ENCODE measurements at regions of chr2 and their contacts with region 1.

Region 1: GRCh38 chr2:44981136-44982108 is 27.8 kb downstream of the SIX2 start:
- DNase-seq: peak; percentile 82

Region 2: DNA sequence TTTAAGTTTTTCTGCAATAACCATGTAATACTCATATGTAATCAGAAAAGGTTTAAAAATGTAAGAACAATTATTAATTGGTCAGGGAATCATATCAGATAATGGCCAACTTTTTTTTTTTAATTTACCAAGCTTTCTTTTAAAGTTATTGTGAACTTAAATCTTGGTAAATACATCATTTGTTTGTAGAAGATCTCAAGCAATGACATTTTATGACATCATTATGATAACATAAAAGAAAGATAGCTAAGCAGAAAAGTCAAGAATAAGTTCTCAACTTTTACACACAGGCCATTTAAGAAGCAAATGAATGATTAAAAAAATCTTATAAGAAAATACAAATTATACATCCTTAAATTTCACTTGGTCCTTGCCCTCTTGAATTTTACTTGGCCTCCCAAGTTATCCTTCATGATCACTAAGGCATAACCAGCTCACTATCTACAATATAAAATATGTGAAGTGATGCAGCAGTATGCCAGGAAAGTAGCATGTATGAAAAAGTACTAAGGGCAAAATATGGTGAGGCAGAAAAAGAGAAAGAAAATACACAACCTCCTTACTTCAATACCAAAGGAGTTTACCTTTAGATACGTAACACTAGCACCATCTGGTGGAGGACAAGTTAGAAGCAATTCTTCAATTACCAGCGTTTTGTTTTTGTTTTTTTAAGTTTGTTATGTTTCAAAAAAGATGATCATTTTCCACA is 513.0 kb after region 1 on chr2:
- in situ Hi-C with region 1: loop called (anchors 25 kb)
- DNase-seq: peak; percentile 60

Region 3: GRCh38 chr2:45585267-45585861 is 603.9 kb after region 1 on chr2:
- in situ Hi-C with region 1: loop called (anchors 25 kb)
- DNase-seq: peak; percentile 73